Ascending aorta (tissue), 2 donors: ENCODE measurements at regions of chr3 and their contacts with region 1.

Region 1: GRCh38 chr3:11379233-11379823 is 107.1 kb downstream of the ATG7 start:
- DNase-seq: no peak
- H3K4me3 ChIP-seq: peak overlapping the region; percentile 6 to 51
- H3K27ac ChIP-seq: peak overlapping the region; percentile 42 to 54
- H3K4me1 ChIP-seq: peaks cover 4 to 16% of the 10 kb centered on the region in 2 donors
- H3K27me3 ChIP-seq: no peaks in the 10 kb centered on the region
- CTCF ChIP-seq: peak; percentile 58 to 78 (median 65)

Region 2: DNA sequence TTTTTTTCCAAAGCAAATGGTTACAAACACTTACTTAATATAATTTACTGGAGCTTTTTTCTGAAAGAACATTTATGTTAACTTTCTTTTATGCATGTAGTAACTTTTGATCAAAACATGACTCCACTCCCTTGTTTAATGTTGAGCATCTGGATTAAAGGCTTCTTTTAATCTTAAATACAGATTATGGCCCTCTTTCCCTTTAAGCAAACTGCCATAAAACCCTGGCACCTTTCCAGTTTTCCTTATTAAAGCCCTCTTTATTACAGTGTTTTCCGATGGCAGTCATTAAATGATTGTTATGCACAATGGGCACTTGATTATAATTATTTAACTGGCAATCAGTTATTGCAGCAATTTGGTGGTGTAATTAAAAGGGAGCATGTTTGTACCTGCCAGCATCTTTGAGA is 97.4 kb after region 1 on chr3:
- intact Hi-C with region 1: no loop called
- DNase-seq: no peak
- H3K4me3 ChIP-seq: no peak overlapping the region
- H3K27ac ChIP-seq: peak overlapping the region; percentile 86 to 87
- H3K4me1 ChIP-seq: peaks cover 9 to 29% of the 10 kb centered on the region in 2 donors
- H3K27me3 ChIP-seq: no peaks in the 10 kb centered on the region
- CTCF ChIP-seq: no peak

Region 3: DNA sequence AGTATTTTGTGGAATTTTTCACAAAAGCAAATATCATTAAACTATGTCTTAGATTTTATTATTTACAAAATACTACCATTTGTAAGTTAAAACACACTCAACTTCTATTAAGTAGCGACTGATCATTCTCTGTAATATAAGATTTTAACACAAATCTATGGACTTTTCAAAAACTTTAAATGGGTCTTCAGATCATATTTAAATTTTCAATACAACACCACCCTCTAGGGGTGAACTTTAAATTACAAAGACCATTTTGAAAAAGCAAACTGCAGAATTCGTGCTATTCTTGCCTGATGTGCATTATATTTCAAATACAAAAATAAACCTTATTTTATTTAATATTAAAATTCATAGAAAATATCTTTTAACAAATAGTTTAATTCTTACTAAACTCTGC is 272.6 kb after region 1 on chr3:
- intact Hi-C with region 1: loop called (anchors 1 kb)
- DNase-seq: no peak
- H3K4me3 ChIP-seq: no peak overlapping the region
- H3K27ac ChIP-seq: no peak overlapping the region
- H3K4me1 ChIP-seq: peaks cover 0 to 5% of the 10 kb centered on the region in 2 donors
- H3K27me3 ChIP-seq: no peaks in the 10 kb centered on the region
- CTCF ChIP-seq: peak; percentile 29 to 56 (median 40)

Region 4: DNA sequence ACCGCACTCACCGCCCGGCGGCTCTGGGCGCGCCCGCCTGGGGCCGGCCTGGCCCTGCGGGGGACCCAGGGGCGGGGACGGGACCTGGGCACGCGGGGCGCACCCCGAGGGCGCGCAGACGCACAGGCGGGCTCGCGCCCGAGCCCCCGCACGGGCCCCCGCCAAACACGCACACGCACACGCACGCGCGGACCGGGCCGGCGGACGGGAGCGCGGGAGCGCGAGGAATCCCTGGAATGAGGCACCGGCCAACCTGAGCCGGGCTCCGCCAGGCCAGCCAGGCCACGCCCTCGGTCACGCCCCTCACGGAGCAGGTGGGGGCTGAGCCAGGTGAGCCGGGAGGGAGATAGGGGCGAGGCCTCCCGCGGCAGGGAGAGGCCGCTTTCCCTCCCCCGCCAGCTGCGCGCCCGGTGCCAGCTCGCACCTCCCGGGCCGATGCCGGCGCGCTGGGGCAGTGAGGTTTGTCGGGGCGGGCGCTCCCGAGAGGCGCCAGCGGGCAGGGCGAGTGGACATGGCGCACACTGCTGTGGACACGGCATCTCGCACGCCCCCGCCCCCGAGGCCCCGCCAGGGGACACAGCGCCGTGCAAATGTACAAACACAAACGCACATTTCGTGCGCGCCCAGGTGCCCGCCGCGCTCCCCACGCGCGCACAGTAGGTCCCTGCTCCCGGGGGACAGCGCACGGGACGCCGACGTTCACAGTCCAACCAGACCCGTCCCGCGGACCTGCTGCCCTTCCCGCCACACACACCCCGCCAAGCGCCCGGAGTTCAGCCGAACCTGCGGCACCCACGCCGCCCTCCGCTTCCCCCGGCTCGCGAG is 340.3 kb after region 1 on chr3:
- intact Hi-C with region 1: loop called (anchors 1 kb)
- DNase-seq: peak; percentile 16 to 83
- H3K4me3 ChIP-seq: peak overlapping the region; percentile 70 to 93
- H3K27ac ChIP-seq: peak overlapping the region; percentile 84 to 98
- H3K4me1 ChIP-seq: peaks cover 0 to 14% of the 10 kb centered on the region in 2 donors
- H3K27me3 ChIP-seq: no peaks in the 10 kb centered on the region
- CTCF ChIP-seq: no peak

Region 5: GRCh38 chr3:11803977-11804892 is 424.9 kb after region 1 on chr3:
- intact Hi-C with region 1: loop called (anchors 1 kb)
- DNase-seq: no peak
- H3K4me3 ChIP-seq: no peak overlapping the region
- H3K27ac ChIP-seq: no peak overlapping the region
- H3K4me1 ChIP-seq: no peaks in the 10 kb centered on the region
- H3K27me3 ChIP-seq: no peaks in the 10 kb centered on the region
- CTCF ChIP-seq: peak; percentile 61 to 77 (median 61)